ENCODE measurements at regions of chr7 and their contacts with region 1.

Region 1: GRCh38 chr7:64902806-64903721 is at the start of gene ZNF273:
- DNase-seq: peak; percentile 95
- H3K4me3 Mint-ChIP-seq: peak within 1 kb of the TSS; percentile 92
- H3K27ac Mint-ChIP-seq: peak within 1 kb of the TSS; percentile 87
- H3K4me1 Mint-ChIP-seq: peaks cover 39% of the 10 kb centered on the region
- H3K27me3 Mint-ChIP-seq: no peaks in the 10 kb centered on the region
- total RNA-seq, gene ZNF273: 9.6 to 10.9 TPM

Region 2: GRCh38 chr7:64665980-64666662 is 236.9 kb before region 1 on chr7 and contains the start of gene ZNF107:
- CTCF ChIA-PET with region 1: no interaction called
- POLR2A ChIA-PET with region 1: interaction called, 3 read pairs
- intact Hi-C with region 1: loop called (anchors 1 kb)
- DNase-seq: peak; percentile 94
- H3K4me3 Mint-ChIP-seq: peak within 1 kb of the TSS; percentile 90
- H3K27ac Mint-ChIP-seq: peak within 1 kb of the TSS; percentile 95
- H3K4me1 Mint-ChIP-seq: peaks cover 43% of the 10 kb centered on the region
- H3K27me3 Mint-ChIP-seq: no peaks in the 10 kb centered on the region
- total RNA-seq, gene ZNF107: 13.5 to 14.3 TPM

Region 3: DNA sequence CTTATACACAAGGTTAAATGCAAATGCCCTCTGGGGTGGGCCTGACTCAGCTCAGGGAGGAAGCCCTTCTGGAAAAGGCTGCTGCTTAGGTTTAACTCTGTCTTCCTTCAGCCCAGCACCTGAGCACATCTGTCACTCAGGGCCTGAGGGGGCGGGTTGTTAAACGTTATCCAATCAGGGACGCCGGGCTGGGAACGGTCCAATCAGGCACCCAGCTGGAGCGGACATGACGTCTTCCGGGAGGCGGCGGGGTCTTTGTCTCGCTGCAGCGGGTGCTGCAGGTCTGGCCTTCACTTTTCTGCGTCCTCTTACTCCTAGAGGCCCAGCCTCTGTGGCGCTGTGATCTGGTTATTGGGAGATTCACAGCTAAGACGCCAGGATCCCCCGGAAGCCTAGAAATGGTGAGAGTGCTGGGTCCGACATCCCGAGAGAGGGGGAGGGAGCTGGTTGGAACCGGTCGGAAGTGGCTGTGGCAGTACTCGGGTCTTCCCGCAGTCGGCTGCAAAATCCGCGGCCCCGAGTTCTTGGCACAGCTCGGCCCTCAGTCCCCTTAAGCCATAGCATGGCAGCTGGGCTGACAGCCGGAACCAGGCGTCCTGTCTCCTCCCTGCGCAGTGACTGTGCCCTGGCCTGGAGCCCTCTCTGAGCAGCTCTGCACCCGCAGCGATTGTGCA is 108.8 kb before region 1 on chr7 and contains the start of gene ZNF138:
- CTCF ChIA-PET with region 1: interaction called, 4 read pairs
- POLR2A ChIA-PET with region 1: interaction called, 6 read pairs
- intact Hi-C with region 1: loop called (anchors 1 kb)
- DNase-seq: peak; percentile 97
- H3K4me3 Mint-ChIP-seq: peak within 1 kb of the TSS; percentile 99
- H3K27ac Mint-ChIP-seq: peak within 1 kb of the TSS; percentile 97
- H3K4me1 Mint-ChIP-seq: peaks cover 18% of the 10 kb centered on the region
- H3K27me3 Mint-ChIP-seq: no peaks in the 10 kb centered on the region
- total RNA-seq, gene ZNF138: 10.3 to 10.5 TPM

Region 4: GRCh38 chr7:65006094-65006992 is 103.3 kb after region 1 on chr7 and contains the start of gene ERV3-1:
- CTCF ChIA-PET with region 1: no interaction called
- POLR2A ChIA-PET with region 1: interaction called, 13 read pairs
- intact Hi-C with region 1: loop called (anchors 1 kb)
- DNase-seq: peak; percentile 96
- H3K4me3 Mint-ChIP-seq: peak within 1 kb of the TSS; percentile 95
- H3K27ac Mint-ChIP-seq: peak within 1 kb of the TSS; percentile 70
- H3K4me1 Mint-ChIP-seq: peaks cover 36% of the 10 kb centered on the region
- H3K27me3 Mint-ChIP-seq: no peaks in the 10 kb centered on the region
- total RNA-seq, gene ERV3-1: 8.2 to 8.7 TPM

Region 5: DNA sequence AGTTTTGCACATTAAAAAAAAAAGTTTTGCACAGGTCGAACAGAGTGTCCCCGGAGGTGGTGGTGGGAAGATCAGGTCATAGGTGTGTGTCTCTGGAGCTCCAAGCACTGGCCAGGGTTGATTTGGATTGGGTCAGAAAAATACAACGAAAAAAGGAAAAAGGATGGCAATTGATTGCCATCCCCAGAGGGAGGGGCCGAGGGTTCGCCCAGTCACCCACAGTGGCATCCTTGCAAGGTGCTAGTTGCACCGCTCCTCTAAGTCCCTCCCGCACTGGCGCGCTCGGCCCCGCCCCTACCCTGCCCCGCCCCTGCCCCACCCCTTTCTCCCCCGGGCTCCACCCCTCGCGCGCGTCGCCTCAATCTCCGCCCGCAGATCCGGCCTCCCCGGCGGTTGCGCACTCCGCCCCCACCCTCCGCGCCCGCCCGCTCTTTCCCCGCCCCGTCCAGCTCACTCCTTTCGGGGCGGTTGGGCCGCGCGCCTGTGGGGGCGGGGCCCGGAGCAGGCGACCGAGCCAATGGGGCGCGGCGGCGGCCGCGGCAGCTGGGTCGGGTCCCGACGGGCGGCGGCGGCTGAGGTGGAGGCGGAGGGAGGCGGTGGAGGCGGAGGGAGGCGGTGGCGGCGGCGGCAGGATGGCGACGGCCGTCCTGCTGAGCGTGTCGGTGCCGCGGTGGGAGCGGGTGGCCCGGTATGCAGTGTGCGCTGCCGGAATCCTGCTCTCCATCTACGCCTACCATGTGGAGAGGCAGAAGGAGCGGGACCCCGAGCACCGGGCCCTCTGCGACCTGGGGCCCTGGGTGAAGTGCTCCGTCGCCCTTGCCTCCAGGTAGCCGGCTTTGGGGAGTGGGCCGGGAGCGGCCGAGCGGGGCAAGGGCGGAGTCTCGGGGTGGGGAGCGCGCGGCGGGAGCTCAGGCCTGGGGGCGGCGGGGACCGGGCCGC is 134.9 kb after region 1 on chr7:
- CTCF ChIA-PET with region 1: no interaction called
- POLR2A ChIA-PET with region 1: interaction called, 6 read pairs
- intact Hi-C with region 1: loop called (anchors 1 kb)
- DNase-seq: peak; percentile 96
- H3K4me3 Mint-ChIP-seq: peak overlapping the region; percentile 73
- H3K27ac Mint-ChIP-seq: no peak overlapping the region
- H3K4me1 Mint-ChIP-seq: peaks cover 13% of the 10 kb centered on the region
- H3K27me3 Mint-ChIP-seq: no peaks in the 10 kb centered on the region

Region 6: GRCh38 chr7:65373608-65374351 is 470.7 kb after region 1 on chr7 and contains the start of gene ZNF92:
- CTCF ChIA-PET with region 1: no interaction called
- POLR2A ChIA-PET with region 1: no interaction called
- intact Hi-C with region 1: loop called (anchors 10 kb)
- DNase-seq: peak; percentile 98
- H3K4me3 Mint-ChIP-seq: peak within 1 kb of the TSS; percentile 95
- H3K27ac Mint-ChIP-seq: peak within 1 kb of the TSS; percentile 88
- H3K4me1 Mint-ChIP-seq: peaks cover 30% of the 10 kb centered on the region
- H3K27me3 Mint-ChIP-seq: no peaks in the 10 kb centered on the region
- total RNA-seq, gene ZNF92: 12.9 to 13.9 TPM